Tibial artery (tissue), 4 donors: ENCODE measurements at regions of chr7 and their contacts with region 1.

Region 1: GRCh38 chr7:106176414-106177299 is 64.5 kb upstream of the SYPL1 start:
- DNase-seq: peak; percentile 88 to 92
- H3K4me3 ChIP-seq: no peak overlapping the region
- H3K27ac ChIP-seq: peak overlapping the region in 1 of 2 donors; percentile 41
- H3K4me1 ChIP-seq: peaks cover 0 to 39% (median 26%) of the 10 kb centered on the region in 4 donors
- H3K27me3 ChIP-seq: no peaks in the 10 kb centered on the region
- CTCF ChIP-seq: peak; percentile 97 to 98

Region 2: GRCh38 chr7:106285051-106285854 is 108.6 kb after region 1 on chr7:
- intact Hi-C with region 1: loop called (anchors 5 kb)
- DNase-seq: peak; percentile 99 to 100
- H3K4me3 ChIP-seq: peak overlapping the region; percentile 81 to 88
- H3K27ac ChIP-seq: peak overlapping the region; percentile 93 to 99
- H3K4me1 ChIP-seq: peaks cover 0 to 38% (median 14%) of the 10 kb centered on the region in 4 donors
- H3K27me3 ChIP-seq: no peaks in the 10 kb centered on the region
- CTCF ChIP-seq: no peak

Region 3: GRCh38 chr7:106461993-106462859 is 285.6 kb after region 1 on chr7:
- intact Hi-C with region 1: loop called (anchors 2 kb)
- DNase-seq: no peak
- H3K4me3 ChIP-seq: no peak overlapping the region
- H3K27ac ChIP-seq: no peak overlapping the region
- H3K4me1 ChIP-seq: peaks cover 0 to 41% (median 29%) of the 10 kb centered on the region in 4 donors
- H3K27me3 ChIP-seq: no peaks in the 10 kb centered on the region
- CTCF ChIP-seq: peak; percentile 57 to 77

Region 4: GRCh38 chr7:106736508-106737201 is 560.0 kb after region 1 on chr7:
- intact Hi-C with region 1: loop called (anchors 5 kb)
- DNase-seq: peak in 1 of 2 donors; percentile 26
- H3K4me3 ChIP-seq: no peak overlapping the region
- H3K27ac ChIP-seq: peak overlapping the region; percentile 13 to 62
- H3K4me1 ChIP-seq: peaks cover 0 to 28% (median 10%) of the 10 kb centered on the region in 4 donors
- H3K27me3 ChIP-seq: no peaks in the 10 kb centered on the region
- CTCF ChIP-seq: peak; percentile 60 to 75

Region 5: GRCh38 chr7:107150375-107151073 is 973.9 kb after region 1 on chr7:
- intact Hi-C with region 1: loop called (anchors 10 kb)
- DNase-seq: peak; percentile 75 to 86
- H3K4me3 ChIP-seq: no peak overlapping the region
- H3K27ac ChIP-seq: no peak overlapping the region
- H3K4me1 ChIP-seq: peaks cover 0 to 4% (median 0%) of the 10 kb centered on the region in 4 donors
- H3K27me3 ChIP-seq: no peaks in the 10 kb centered on the region
- CTCF ChIP-seq: peak; percentile 52 to 61